Heart left ventricle (tissue), 16 donors: ENCODE measurements at regions of chr1 and their contacts with region 1.

Region 1: GRCh38 chr1:118007391-118007790 is 77.9 kb downstream of the WDR3 start:
- DNase-seq: no peak
- ATAC-seq: no peak
- H3K4me3 ChIP-seq: no peak overlapping the region
- H3K27ac ChIP-seq: no peak overlapping the region
- H3K4me1 ChIP-seq: no peaks in the 10 kb centered on the region
- H3K27me3 ChIP-seq: peaks cover 0 to 3% (median 0%) of the 10 kb centered on the region in 9 donors
- CTCF ChIP-seq: no peak
- POLR2A ChIP-seq: no peak

Region 2: DNA sequence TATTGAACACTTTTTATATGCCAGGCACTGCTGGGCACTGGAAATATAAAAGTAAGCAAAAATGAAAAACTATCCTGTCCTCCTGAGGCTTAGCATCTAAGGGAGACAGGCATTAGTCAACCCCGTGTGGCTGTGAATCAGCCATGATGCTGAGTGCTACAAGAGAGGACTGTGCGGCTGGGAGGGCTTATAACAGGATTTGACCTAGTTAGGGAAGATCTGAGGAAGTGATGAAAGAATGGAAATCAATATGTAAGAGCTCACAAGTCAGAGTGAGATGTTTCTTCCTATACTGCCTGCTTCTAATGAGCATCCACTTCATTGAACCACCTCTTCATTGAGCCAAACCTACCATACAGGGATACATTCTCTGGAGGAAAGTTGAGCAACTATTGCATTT is 900.9 kb before region 1 on chr1:
- intact Hi-C with region 1: no loop called
- DNase-seq: no peak
- ATAC-seq: no peak
- H3K4me3 ChIP-seq: no peak overlapping the region
- H3K27ac ChIP-seq: no peak overlapping the region
- H3K4me1 ChIP-seq: peaks cover 0 to 3% (median 0%) of the 10 kb centered on the region in 12 donors
- H3K27me3 ChIP-seq: no peaks in the 10 kb centered on the region
- CTCF ChIP-seq: no peak
- POLR2A ChIP-seq: no peak

Region 3: DNA sequence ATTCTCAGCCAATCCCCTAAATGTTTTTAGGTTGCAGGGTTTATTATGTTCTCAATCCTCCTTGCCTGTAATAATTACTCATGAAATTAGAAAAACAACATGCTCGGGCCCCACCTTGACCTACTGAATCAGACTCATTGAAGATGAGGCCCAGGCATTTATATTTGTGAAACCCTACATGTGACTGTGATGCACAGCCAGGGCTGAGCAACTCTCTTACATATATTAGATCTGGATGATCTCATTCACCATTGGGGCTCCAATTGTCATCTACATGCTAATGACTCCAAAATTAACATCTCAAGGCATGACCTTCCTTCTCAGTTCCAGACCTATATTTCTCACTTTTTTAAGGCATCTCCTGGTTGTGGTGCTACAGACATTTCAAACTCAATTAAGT is 25.5 kb after region 1 on chr1:
- intact Hi-C with region 1: loop called in 1 of 10 experiments (anchors 2 kb)
- DNase-seq: no peak
- ATAC-seq: no peak
- H3K4me3 ChIP-seq: no peak overlapping the region
- H3K27ac ChIP-seq: no peak overlapping the region
- H3K4me1 ChIP-seq: peaks cover 0 to under 1% (median 0%) of the 10 kb centered on the region in 12 donors
- H3K27me3 ChIP-seq: peaks cover 0 to 3% (median 0%) of the 10 kb centered on the region in 9 donors
- CTCF ChIP-seq: no peak
- POLR2A ChIP-seq: no peak